ENCODE measurements at regions of chr2 and their contacts with region 1.

Region 1: GRCh38 chr2:190088917-190089316 is 26.4 kb upstream of the MSTN start:
- DNase-seq: no peak
- ATAC-seq: no peak

Region 2: DNA sequence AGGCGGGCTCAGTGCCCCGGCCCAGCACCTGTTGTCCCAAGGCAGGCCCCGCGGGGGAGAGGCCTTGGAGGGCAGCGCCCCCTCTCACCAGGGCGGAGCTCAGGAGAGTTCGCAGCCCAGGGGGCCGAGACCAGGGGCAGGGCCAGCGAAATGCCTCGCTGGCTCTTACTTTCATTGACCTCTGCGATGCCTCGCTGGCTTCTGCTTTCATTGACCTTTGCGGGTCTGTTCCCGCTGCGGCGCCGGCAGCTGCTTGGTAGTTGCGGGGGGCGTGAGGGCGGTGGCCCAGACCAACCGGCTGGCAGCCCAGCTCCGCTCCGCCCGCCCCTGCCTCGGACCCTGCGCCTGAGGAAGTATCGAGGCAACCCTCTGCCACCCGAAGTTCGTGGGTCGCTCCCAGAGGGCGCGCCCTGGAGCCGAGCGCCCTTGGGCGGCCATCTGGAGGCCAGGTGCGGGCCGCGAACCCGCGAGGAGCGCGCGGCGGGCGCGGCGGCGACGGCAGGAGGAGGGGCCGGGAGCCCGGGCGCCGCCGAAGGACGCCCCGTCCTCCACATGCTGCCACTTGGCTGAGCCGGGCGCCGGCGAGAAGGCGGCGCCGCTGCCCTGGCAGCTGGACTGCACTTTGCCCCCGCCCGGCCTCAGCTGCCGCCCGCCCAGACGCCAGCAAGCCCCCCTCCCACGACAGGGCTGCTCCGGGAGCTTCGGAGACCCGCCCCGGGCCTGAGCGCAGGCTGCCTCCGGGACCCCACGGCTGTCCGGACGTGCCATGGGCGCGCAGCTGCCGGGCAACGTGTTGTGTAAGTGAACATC is 91.6 kb after region 1 on chr2:
- intact Hi-C with region 1: loop called (anchors 5 kb)
- DNase-seq: peak; percentile 82
- ATAC-seq: peak; percentile 89

Region 3: DNA sequence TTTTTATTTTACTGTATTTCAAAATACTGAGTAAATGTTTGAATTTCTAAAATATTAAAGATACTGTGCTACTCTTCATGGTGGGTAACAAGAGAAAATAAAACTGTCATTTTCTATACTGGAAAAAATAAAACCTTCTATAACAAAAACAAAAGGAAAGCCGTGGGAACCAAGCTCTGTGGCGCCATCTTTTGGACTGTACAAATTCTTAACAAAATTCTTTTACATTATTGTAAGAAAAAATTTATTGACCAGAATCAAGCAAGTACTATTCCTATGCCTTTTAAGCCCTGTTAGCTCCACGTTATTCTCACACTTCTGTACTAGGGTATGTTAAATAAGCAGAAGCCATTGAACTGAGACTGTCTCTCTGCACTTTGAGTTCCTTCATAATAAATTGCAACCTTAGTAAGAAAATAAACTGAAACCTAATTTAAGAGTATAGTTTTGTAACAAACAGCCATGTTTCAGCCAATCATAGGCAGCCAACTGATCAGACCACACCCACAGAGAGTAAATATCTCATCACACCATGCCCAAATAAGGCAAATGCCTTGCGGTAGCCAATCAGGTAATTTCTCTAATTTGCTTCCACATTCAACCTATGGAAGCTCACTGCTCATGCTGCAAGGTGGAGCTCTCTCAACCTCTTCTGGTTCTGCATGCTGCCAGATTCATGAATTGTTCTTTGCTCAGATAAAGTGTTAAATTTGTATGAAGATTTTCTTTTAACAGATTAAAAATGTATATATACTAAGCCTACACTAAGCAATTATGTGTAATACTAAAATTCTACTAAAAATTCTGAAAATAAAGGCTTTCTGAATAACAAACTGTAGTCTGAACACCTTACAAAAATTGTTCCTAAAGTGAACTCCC is 188.6 kb after region 1 on chr2:
- intact Hi-C with region 1: loop called (anchors 2 kb)
- DNase-seq: no peak
- ATAC-seq: no peak

Region 4: GRCh38 chr2:190369635-190370034 is 280.7 kb after region 1 on chr2:
- intact Hi-C with region 1: loop called (anchors 5 kb)
- DNase-seq: no peak
- ATAC-seq: no peak

Region 5: DNA sequence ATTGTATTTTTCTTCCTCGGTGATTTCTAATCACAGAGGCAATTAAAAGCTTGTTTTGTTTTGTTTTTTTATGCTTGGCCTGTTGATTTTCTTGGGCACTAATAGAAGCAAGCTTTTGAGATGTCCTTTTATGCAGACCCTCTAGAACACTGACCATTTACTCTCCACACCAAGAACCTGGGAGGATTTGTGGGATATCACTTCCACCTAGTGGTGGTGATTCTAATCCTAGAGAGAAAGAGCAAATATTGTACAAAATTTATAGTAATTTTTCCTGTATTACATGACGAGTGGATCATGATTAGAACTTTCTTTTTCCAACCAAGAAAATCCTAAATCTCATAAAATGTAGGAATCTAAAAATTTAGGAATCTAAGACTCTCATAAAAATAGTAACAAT is 422.2 kb after region 1 on chr2:
- intact Hi-C with region 1: loop called (anchors 10 kb)
- DNase-seq: no peak
- ATAC-seq: no peak